ENCODE measurements at regions of chr4 and their contacts with region 1.

Region 1: DNA sequence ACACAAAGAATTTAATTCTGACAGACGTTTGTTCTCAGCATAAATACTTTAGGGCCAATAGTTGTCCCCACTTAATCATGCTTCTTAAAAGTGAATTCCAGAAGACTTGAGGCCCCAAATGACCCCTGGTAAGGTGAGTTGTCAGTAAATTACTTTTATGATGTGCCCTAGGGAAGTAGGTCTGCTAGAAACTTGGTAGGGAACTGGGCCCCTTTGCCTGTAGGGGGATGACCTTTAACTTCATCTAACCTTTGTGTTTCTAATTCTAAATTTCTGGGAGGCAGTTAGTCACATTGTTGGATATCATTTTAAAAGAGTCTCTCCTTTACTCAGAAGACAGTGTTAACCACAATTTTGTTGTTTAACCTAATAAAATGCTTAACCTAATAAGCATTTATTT is 28.8 kb downstream of the HHIP start:
- DNase-seq: no peak
- H3K4me3 ChIP-seq: no peak overlapping the region
- H3K27ac ChIP-seq: no peak overlapping the region
- H3K4me1 ChIP-seq: no peaks in the 10 kb centered on the region
- H3K27me3 ChIP-seq: no peaks in the 10 kb centered on the region
- CTCF ChIP-seq: no peak

Region 2: GRCh38 chr4:144421839-144422565 is 252.7 kb before region 1 on chr4:
- dilution Hi-C with region 1: no loop called
- DNase-seq: no peak
- H3K4me3 ChIP-seq: no peak overlapping the region
- H3K27ac ChIP-seq: no peak overlapping the region
- H3K4me1 ChIP-seq: no peaks in the 10 kb centered on the region
- H3K27me3 ChIP-seq: no peaks in the 10 kb centered on the region
- CTCF ChIP-seq: no peak

Region 3: DNA sequence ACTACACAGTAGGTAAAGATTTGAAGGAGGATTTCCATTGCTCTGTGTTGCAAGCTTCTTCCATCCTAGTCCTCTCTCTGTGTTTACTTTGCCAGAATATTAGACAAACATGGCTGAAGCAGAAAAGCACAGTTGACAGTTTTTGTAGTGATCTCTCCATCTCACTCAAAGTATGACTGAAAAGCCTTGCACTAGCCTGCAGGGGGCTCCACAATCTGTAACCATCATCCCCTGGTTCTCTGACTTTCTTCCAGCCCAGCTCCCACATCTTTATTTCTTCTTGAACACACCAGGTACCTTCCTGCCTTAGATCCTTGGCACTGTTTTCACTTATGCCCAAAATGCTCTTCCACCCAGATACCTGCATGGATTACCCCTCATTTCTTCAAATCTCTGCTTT is 62.9 kb before region 1 on chr4:
- dilution Hi-C with region 1: loop called (anchors 10 kb)
- DNase-seq: no peak
- H3K4me3 ChIP-seq: no peak overlapping the region
- H3K27ac ChIP-seq: no peak overlapping the region
- H3K4me1 ChIP-seq: no peaks in the 10 kb centered on the region
- H3K27me3 ChIP-seq: no peaks in the 10 kb centered on the region
- CTCF ChIP-seq: peak; percentile 51 to 79 (median 68)